ENCODE measurements at regions of chr20 and their contacts with region 1.

Region 1: DNA sequence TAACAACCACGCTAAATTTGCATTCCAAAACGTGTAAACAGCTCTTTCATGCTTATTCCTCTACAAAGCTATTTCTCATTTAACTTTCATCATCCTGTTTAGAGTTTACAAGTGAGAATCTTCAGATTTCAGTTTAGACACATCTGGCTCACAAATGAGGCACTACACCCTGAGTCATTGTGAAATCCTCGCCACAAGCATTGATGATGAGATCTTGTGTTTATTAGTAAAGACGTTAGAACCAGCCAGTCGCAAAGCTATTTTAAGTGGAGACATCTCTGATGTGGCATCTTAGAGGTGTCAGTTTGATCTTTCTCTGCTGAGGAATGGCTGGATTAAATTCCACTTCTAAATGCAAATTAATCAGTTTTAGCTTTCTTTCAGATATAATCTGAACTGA is 8.3 kb upstream of the ISM1 start:
- DNase-seq: no peak
- ATAC-seq: no peak
- H3K4me3 Mint-ChIP-seq: no peak overlapping the region
- H3K27ac Mint-ChIP-seq: no peak overlapping the region
- H3K4me1 Mint-ChIP-seq: peaks cover 15% of the 10 kb centered on the region
- H3K27me3 Mint-ChIP-seq: peaks cover 37% of the 10 kb centered on the region

Region 2: GRCh38 chr20:13243826-13244376 is 31.2 kb after region 1 on chr20:
- CTCF ChIA-PET with region 1: interaction called, 11 read pairs
- POLR2A ChIA-PET with region 1: interaction called, 3 read pairs
- DNase-seq: no peak
- ATAC-seq: no peak
- H3K4me3 Mint-ChIP-seq: no peak overlapping the region
- H3K27ac Mint-ChIP-seq: no peak overlapping the region
- H3K4me1 Mint-ChIP-seq: peaks cover 37% of the 10 kb centered on the region
- H3K27me3 Mint-ChIP-seq: no peaks in the 10 kb centered on the region

Region 3: GRCh38 chr20:13455713-13456112 is 243.0 kb after region 1 on chr20:
- CTCF ChIA-PET with region 1: no interaction called
- POLR2A ChIA-PET with region 1: no interaction called
- DNase-seq: no peak
- ATAC-seq: no peak
- H3K4me3 Mint-ChIP-seq: no peak overlapping the region
- H3K27ac Mint-ChIP-seq: no peak overlapping the region
- H3K4me1 Mint-ChIP-seq: no peaks in the 10 kb centered on the region
- H3K27me3 Mint-ChIP-seq: no peaks in the 10 kb centered on the region

Measured in activated CD8-positive, alpha-beta T cell treated with anti-CD3 and anti-CD28 coated beads, Interleukin-2, amount 10 ng/mL, durations not matched to agents 7 days and 5 days (primary cell).